Heart left ventricle (tissue), 16 donors: ENCODE measurements at regions of chr1 and their contacts with region 1.

Region 1: GRCh38 chr1:76154206-76154956 is 79.8 kb downstream of the ST6GALNAC3 start:
- DNase-seq: peak; percentile 67 to 82 (median 69)
- ATAC-seq: peak; percentile 82 to 93 (median 92)
- H3K4me3 ChIP-seq: peak overlapping the region in 10 of 12 donors; percentile 10 to 54 (median 42)
- H3K27ac ChIP-seq: peak overlapping the region in 11 of 12 donors; percentile 0 to 56 (median 38)
- H3K4me1 ChIP-seq: peaks cover 0 to 15% (median 4%) of the 10 kb centered on the region in 12 donors
- H3K27me3 ChIP-seq: peaks cover 0 to 3% (median 0%) of the 10 kb centered on the region in 9 donors
- CTCF ChIP-seq: peak; percentile 89 to 98 (median 94)
- POLR2A ChIP-seq: no peak

Region 2: GRCh38 chr1:75991497-75992114 is 162.8 kb before region 1 on chr1:
- intact Hi-C with region 1: loop called in 5 of 10 experiments (anchors 2 to 10 kb)
- DNase-seq: peak; percentile 84 to 93 (median 87)
- ATAC-seq: peak; percentile 47 to 75 (median 70)
- H3K4me3 ChIP-seq: no peak overlapping the region
- H3K27ac ChIP-seq: no peak overlapping the region
- H3K4me1 ChIP-seq: no peaks in the 10 kb centered on the region
- H3K27me3 ChIP-seq: peaks cover 0 to 17% (median 0%) of the 10 kb centered on the region in 9 donors
- CTCF ChIP-seq: peak; percentile 59 to 85 (median 80)
- POLR2A ChIP-seq: no peak

Region 3: GRCh38 chr1:76074321-76075187 is 79.8 kb before region 1 on chr1 and contains the start of gene ST6GALNAC3:
- intact Hi-C with region 1: loop called in 1 of 10 experiments (anchors 5 kb)
- DNase-seq: peak; percentile 76 to 88 (median 77)
- ATAC-seq: peak; percentile 79 to 98 (median 94)
- H3K4me3 ChIP-seq: peak within 1 kb of the TSS; percentile 46 to 90 (median 68)
- H3K27ac ChIP-seq: peak within 1 kb of the TSS; percentile 66 to 93 (median 80)
- H3K4me1 ChIP-seq: peaks cover 0 to 28% (median 9%) of the 10 kb centered on the region in 12 donors
- H3K27me3 ChIP-seq: no peaks in the 10 kb centered on the region
- CTCF ChIP-seq: no peak
- POLR2A ChIP-seq: peak in 1 of 2 donors; percentile 75
- total RNA-seq, gene ST6GALNAC3: 2.5 to 7.7 (median 4.4) TPM

Region 4: DNA sequence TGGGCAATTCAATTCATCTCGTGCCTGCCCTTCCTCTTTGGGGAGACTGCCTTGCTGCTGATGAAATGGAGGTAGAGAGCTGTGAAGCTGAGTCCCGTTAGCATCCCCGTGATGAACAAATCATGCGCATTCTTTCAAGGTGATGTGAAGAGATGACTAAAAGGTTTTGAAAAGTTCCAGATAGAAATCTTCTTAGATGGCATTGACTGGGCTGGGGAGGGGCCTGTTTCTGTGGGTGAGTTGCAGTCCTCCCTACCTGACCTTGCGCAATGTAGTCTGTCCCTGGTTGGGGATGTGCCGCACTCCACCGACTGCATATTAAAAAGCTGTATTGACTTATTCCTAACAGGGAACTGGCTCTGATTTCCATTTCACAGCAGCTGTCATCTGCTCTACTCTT is 30.2 kb before region 1 on chr1:
- intact Hi-C with region 1: no loop called
- DNase-seq: no peak
- ATAC-seq: no peak
- H3K4me3 ChIP-seq: no peak overlapping the region
- H3K27ac ChIP-seq: no peak overlapping the region
- H3K4me1 ChIP-seq: peaks cover 0 to 14% (median 2%) of the 10 kb centered on the region in 12 donors
- H3K27me3 ChIP-seq: no peaks in the 10 kb centered on the region
- CTCF ChIP-seq: no peak
- POLR2A ChIP-seq: no peak

Region 5: DNA sequence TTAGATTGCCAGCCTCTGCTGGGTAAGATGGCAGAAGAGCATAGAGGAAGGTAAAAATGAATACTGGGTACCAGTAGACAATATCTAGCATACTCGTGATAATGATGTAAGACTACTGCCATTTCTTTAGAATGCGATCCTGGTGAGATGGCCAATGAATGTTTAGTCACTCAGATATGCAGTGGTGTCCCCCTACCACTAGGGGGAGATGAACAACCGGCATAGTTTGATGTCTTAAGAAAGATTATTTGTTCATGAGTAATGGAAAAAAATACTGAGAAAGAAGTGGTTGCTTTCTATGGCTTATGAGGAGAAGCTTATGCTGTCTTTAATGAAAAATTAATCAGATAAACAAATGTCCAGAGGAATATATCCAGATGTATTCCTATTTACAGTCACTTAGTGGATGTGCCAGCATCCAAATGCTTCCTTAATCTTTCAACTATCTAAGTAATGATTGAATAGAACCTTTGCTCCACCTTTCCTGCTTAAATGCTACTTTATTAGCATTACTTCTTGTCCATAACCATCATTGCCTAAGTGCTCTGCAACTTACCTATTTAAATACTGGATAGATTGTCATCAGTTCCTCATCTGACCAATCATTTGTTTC is 176.7 kb after region 1 on chr1:
- intact Hi-C with region 1: loop called in 4 of 10 experiments (anchors 10 kb)
- DNase-seq: no peak
- ATAC-seq: peak in 2 of 4 donors; percentile 28 to 52
- H3K4me3 ChIP-seq: no peak overlapping the region
- H3K27ac ChIP-seq: no peak overlapping the region
- H3K4me1 ChIP-seq: peaks cover 0 to 7% (median 0%) of the 10 kb centered on the region in 12 donors
- H3K27me3 ChIP-seq: no peaks in the 10 kb centered on the region
- CTCF ChIP-seq: peak; percentile 72 to 93 (median 85)
- POLR2A ChIP-seq: no peak

Region 6: DNA sequence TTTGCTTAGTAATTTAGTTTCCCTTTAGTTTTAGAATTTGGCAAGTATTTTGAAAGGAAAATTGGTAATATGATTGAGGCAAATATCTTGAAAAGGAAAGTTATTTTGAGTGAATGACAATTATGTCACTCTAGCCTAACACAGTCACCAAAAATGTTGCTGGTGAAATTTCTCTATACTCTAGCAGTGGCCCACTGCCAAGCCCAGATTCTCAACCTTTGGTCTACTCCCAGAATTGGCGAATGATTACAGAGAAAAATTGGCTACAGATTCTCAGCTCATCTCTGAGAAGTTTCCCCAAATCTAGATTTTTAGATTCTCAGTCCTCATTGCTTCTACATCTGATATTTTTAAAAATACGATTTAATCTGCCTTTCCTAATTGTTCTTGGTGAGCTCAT is 980.0 kb after region 1 on chr1:
- intact Hi-C with region 1: loop called in 8 of 10 experiments (anchors 5 to 10 kb)
- DNase-seq: no peak
- ATAC-seq: no peak
- H3K4me3 ChIP-seq: no peak overlapping the region
- H3K27ac ChIP-seq: no peak overlapping the region
- H3K4me1 ChIP-seq: peaks cover 0 to 7% (median 0%) of the 10 kb centered on the region in 12 donors
- H3K27me3 ChIP-seq: no peaks in the 10 kb centered on the region
- CTCF ChIP-seq: no peak
- POLR2A ChIP-seq: no peak

Region 7: GRCh38 chr1:77533660-77534305 is 1379.4 kb after region 1 on chr1:
- intact Hi-C with region 1: loop called in 1 of 10 experiments (anchors 10 kb)
- DNase-seq: peak in 4 of 5 donors; percentile 45 to 57 (median 51)
- ATAC-seq: peak; percentile 57 to 71 (median 64)
- H3K4me3 ChIP-seq: no peak overlapping the region
- H3K27ac ChIP-seq: no peak overlapping the region
- H3K4me1 ChIP-seq: peaks cover 0 to 8% (median under 1%) of the 10 kb centered on the region in 12 donors
- H3K27me3 ChIP-seq: no peaks in the 10 kb centered on the region
- CTCF ChIP-seq: peak; percentile 74 to 87 (median 83)
- POLR2A ChIP-seq: no peak